Activated T-helper 1 cell treated with anti-CD3 and anti-CD28 coated beads, Interleukin-12 subunit alpha, Interleukin-12 subunit beta, Interleukin-2, Interleukin-4 antibody, amounts not matched to agents 30 ng/mL and 10 ng/mL and 1 ng/mL, durations not matched to agents 14 hours and 24 hours and 36 hours (primary cell): ENCODE measurements at regions of chr11 and their contacts with region 1.

Region 1: DNA sequence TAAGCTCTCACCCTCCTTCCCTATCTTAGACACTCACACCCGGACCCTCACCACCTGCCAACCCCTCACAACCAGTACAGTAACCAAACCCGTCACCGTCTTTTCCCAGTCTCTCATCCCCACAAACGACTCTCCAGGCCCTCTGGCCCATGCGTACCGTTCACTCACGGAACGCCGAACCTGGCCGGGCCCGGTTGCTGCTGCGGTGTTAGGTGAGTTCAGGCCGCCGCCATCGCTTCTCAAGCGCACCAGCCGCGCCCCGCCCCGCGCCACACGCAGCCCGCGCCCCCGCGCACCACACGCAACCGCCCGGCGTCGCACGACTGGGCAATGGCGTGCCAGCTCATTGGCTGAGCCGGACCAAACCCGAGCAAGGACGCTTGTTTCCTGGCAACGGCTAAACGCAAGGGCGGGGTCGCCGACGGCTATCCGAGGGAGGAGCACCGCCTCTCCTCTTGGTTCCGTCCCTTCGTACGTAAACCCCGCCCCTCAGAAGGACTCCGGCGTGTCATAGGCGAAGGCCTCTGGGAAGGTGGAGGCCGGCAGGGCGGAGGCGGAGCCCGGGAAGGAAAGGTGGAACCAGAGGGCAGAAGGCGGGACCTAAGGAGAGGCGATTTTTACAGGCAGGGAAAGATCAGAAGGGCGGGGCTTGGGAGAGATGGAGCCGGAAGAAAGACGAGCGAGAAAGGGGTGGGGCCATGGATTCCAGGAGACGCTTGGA is at the start of gene FHIP1B:
- DNase-seq: peak; percentile 100
- H3K4me3 Mint-ChIP-seq: peak within 1 kb of the TSS; percentile 99
- H3K27ac Mint-ChIP-seq: peak within 1 kb of the TSS; percentile 96
- H3K4me1 Mint-ChIP-seq: peaks cover 38% of the 10 kb centered on the region
- H3K27me3 Mint-ChIP-seq: peaks cover 3% of the 10 kb centered on the region
- total RNA-seq, gene FHIP1B: 19.3 TPM in 2 replicates

Region 2: DNA sequence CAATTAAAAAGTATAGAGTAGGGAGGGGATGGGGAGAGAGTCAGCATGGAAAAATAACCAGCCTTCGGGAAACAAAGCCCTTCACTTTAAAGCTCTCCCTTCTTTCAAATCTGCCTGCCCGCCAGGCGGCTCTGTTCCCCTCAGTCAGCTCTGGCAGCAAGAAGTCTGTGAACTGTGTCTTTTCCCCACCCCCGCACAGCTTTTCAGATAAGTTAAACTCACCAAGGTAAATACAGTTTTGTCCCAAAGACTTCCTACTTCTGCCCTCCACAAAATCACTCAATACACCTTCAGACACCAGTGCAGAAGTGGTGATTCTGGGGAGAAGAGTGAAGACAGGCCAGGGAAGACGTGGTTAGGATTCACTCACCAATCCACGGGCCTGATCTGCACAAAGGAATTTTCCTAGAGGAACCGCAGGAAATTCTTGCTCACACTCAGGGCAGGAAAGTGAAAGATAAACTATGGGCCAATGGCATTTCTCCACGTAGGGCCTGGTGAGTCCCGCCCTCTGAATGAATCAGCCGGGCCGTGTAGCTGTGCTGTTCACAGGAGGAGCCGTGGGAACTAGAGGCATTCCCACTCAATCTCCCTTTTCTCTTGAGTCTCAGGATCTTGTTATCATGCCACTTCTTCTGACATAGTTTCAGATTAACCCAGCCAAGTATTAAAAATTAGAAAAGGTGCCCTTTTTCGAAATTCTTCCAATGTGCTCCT is 549.7 kb before region 1 on chr11 and contains the start of gene TRIM5:
- intact Hi-C with region 1: loop called (anchors 2 kb)
- DNase-seq: peak; percentile 74
- H3K4me3 Mint-ChIP-seq: peak within 1 kb of the TSS; percentile 89
- H3K27ac Mint-ChIP-seq: peak within 1 kb of the TSS; percentile 96
- H3K4me1 Mint-ChIP-seq: peaks cover 57% of the 10 kb centered on the region
- H3K27me3 Mint-ChIP-seq: no peaks in the 10 kb centered on the region
- total RNA-seq, gene TRIM5: 7.9 and 8.6 TPM in 2 replicates

Region 3: DNA sequence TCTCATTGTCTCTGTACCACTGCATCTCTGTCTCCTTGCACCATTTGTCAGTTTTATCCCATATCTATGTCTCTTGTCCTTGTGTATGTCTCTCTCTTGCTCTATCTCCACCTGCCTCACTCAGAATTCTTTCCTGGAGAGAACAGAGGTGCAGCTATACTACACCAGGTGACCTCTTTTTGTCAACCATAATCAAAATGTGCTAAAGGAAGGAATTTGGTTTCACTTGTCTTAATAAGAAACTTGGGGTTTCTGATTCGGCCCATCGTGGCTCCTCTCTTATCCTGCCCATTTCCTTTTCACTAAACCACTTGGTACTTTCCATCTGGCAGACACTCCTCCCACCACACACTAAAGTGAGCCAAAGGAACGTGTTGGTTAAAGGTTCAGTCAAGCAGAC is 31.2 kb before region 1 on chr11:
- intact Hi-C with region 1: no loop called
- DNase-seq: peak; percentile 22
- H3K4me3 Mint-ChIP-seq: peak overlapping the region; percentile 32
- H3K27ac Mint-ChIP-seq: no peak overlapping the region
- H3K4me1 Mint-ChIP-seq: peaks cover 36% of the 10 kb centered on the region
- H3K27me3 Mint-ChIP-seq: peaks cover 3% of the 10 kb centered on the region

Region 4: GRCh38 chr11:6283453-6284023 is 49.0 kb after region 1 on chr11:
- intact Hi-C with region 1: no loop called
- DNase-seq: no peak
- H3K4me3 Mint-ChIP-seq: no peak overlapping the region
- H3K27ac Mint-ChIP-seq: no peak overlapping the region
- H3K4me1 Mint-ChIP-seq: no peaks in the 10 kb centered on the region
- H3K27me3 Mint-ChIP-seq: peaks cover 47% of the 10 kb centered on the region

Region 5: GRCh38 chr11:6315811-6316425 is 81.4 kb after region 1 on chr11:
- intact Hi-C with region 1: loop called (anchors 1 kb)
- DNase-seq: no peak
- H3K4me3 Mint-ChIP-seq: no peak overlapping the region
- H3K27ac Mint-ChIP-seq: no peak overlapping the region
- H3K4me1 Mint-ChIP-seq: peaks cover 11% of the 10 kb centered on the region
- H3K27me3 Mint-ChIP-seq: peaks cover 49% of the 10 kb centered on the region

Region 6: DNA sequence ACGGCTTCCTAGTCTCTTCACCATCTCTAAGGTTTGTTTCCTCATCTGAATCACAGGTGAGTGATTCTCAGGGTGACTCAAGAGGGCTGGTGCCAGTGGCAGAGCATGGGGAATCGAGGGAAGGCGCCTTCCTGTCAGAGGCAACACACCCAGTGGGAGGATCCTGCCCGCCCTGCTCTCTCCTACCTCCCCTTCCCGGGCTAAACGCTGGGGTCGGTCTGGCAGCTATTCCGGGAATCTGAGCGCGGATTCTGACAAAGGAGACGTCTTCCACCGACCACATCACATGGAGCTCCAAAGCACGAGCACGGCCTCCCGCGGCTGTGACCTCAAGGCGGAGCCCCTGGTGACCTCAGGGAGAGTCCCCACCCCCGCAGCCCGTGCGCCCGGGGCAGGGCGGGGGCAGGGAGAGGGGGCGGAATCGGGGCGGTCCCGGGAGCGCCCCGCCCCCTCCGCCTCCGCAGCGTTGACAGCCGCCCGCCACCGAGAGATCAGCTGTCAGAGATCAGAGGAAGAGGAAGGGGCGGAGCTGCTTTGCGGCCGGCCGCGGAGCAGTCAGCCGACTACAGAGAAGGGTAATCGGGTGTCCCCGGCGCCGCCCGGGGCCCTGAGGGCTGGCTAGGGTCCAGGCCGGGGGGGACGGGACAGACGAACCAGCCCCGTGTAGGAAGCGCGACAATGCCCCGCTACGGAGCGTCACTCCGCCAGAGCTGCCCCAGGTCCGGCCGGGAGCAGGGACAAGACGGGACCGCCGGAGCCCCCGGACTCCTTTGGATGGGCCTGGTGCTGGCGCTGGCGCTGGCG is 155.6 kb after region 1 on chr11 and contains the start of gene SMPD1:
- intact Hi-C with region 1: loop called (anchors 1 kb)
- DNase-seq: peak; percentile 89
- H3K4me3 Mint-ChIP-seq: peak within 1 kb of the TSS; percentile 86
- H3K27ac Mint-ChIP-seq: peak within 1 kb of the TSS; percentile 98
- H3K4me1 Mint-ChIP-seq: peaks cover 20% of the 10 kb centered on the region
- H3K27me3 Mint-ChIP-seq: peaks cover 7% of the 10 kb centered on the region
- total RNA-seq, gene SMPD1: 8.5 and 9.4 TPM in 2 replicates

Region 7: GRCh38 chr11:6612213-6613041 is 377.9 kb after region 1 on chr11 and contains the start of gene TAF10:
- intact Hi-C with region 1: loop called (anchors 1 kb)
- DNase-seq: peak; percentile 95
- H3K4me3 Mint-ChIP-seq: peak within 1 kb of the TSS; percentile 93
- H3K27ac Mint-ChIP-seq: peak within 1 kb of the TSS; percentile 87
- H3K4me1 Mint-ChIP-seq: peaks cover 29% of the 10 kb centered on the region
- H3K27me3 Mint-ChIP-seq: no peaks in the 10 kb centered on the region
- total RNA-seq, gene TAF10: 155 and 166 TPM in 2 replicates

Region 8: GRCh38 chr11:6746086-6746618 is 511.6 kb after region 1 on chr11:
- intact Hi-C with region 1: loop called (anchors 2 kb)
- DNase-seq: peak; percentile 40
- H3K4me3 Mint-ChIP-seq: no peak overlapping the region
- H3K27ac Mint-ChIP-seq: no peak overlapping the region
- H3K4me1 Mint-ChIP-seq: no peaks in the 10 kb centered on the region
- H3K27me3 Mint-ChIP-seq: no peaks in the 10 kb centered on the region

Region 9: GRCh38 chr11:7986768-7987559 is 1752.4 kb after region 1 on chr11 and contains the start of gene EIF3F:
- intact Hi-C with region 1: loop called (anchors 5 kb)
- DNase-seq: peak; percentile 91
- H3K4me3 Mint-ChIP-seq: peak within 1 kb of the TSS; percentile 99
- H3K27ac Mint-ChIP-seq: peak within 1 kb of the TSS; percentile 93
- H3K4me1 Mint-ChIP-seq: peaks cover 39% of the 10 kb centered on the region
- H3K27me3 Mint-ChIP-seq: peaks cover 2% of the 10 kb centered on the region
- total RNA-seq, gene EIF3F: 210 and 214 TPM in 2 replicates